OCI-LY7 (cell line): ENCODE measurements at regions of chr10 and their contacts with region 1.

Region 1: GRCh38 chr10:32017021-32017420 is 39.2 kb downstream of the KIF5B start:
- DNase-seq: no peak
- H3K4me3 ChIP-seq: no peak overlapping the region
- H3K27ac ChIP-seq: no peak overlapping the region
- H3K4me1 ChIP-seq: no peaks in the 10 kb centered on the region
- CTCF ChIP-seq: no peak

Region 2: GRCh38 chr10:32033171-32033570 is 16.1 kb after region 1 on chr10:
- CTCF ChIA-PET with region 1: no interaction called
- POLR2A ChIA-PET with region 1: interaction called, 6 read pairs
- intact Hi-C with region 1: loop called (anchors 2 kb)
- DNase-seq: no peak
- H3K4me3 ChIP-seq: no peak overlapping the region
- H3K27ac ChIP-seq: no peak overlapping the region
- H3K4me1 ChIP-seq: no peaks in the 10 kb centered on the region
- CTCF ChIP-seq: no peak